ENCODE measurements at regions of chrX and their contacts with region 1.

Region 1: GRCh38 chrX:115393271-115393670 is 103.8 kb downstream of the LUZP4 start:
- DNase-seq: peak; percentile 32 to 34
- H3K4me3 ChIP-seq: no peak overlapping the region
- H3K4me3 Mint-ChIP-seq: peak overlapping the region; percentile 39
- H3K27ac Mint-ChIP-seq: peak overlapping the region; percentile 48
- H3K4me1 ChIP-seq: peaks cover 23% of the 10 kb centered on the region
- H3K4me1 Mint-ChIP-seq: peaks cover 17% of the 10 kb centered on the region
- H3K27me3 ChIP-seq: no peaks in the 10 kb centered on the region
- H3K27me3 Mint-ChIP-seq: no peaks in the 10 kb centered on the region
- CTCF ChIP-seq: no peak

Region 2: DNA sequence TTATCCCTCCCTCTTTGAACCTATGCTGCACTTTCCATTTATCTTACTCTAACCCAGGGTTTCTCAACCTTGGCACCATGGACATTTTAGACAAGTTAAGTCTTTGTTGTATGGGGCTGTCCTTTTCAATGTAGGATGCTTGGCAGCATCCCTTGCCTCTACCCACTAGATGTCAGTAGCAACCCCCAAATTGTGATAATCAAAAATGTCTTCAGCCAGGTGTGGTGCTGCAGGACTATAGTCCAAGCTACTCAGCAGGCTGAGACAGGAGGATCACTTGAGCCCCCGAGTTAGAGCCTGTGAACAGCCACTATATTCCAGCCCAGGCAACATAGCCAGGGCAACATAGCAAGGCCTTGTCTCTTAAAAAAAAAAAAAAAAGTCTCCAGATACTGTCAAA is 166.3 kb before region 1 on chrX:
- CTCF ChIA-PET with region 1: no interaction called
- POLR2A ChIA-PET with region 1: no interaction called
- intact Hi-C with region 1: no loop called
- DNase-seq: peak; percentile 38
- H3K4me3 ChIP-seq: no peak overlapping the region
- H3K4me3 Mint-ChIP-seq: no peak overlapping the region
- H3K27ac Mint-ChIP-seq: no peak overlapping the region
- H3K4me1 ChIP-seq: no peaks in the 10 kb centered on the region
- H3K4me1 Mint-ChIP-seq: no peaks in the 10 kb centered on the region
- H3K27me3 ChIP-seq: no peaks in the 10 kb centered on the region
- H3K27me3 Mint-ChIP-seq: peaks cover 3% of the 10 kb centered on the region
- CTCF ChIP-seq: peak; percentile 35 to 74

Region 3: DNA sequence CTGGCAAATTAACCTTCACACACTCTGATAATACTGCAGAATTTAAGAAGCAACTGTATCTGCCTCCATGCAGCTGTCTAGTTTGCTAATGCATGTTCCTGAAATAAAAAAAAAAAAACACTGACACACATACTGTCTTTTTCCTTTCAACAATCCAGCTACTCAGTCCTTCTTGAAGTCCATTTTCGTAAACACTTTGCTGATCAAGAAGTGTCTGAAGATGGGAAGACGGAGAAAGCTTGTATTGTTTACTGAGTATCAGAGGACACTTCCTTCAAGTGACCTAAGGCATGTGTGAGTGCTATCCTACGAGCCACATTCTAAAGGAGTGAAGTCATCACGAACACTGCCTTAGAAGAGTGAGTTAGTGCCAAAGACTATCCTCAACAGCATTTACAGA is 21.1 kb before region 1 on chrX:
- CTCF ChIA-PET with region 1: no interaction called
- POLR2A ChIA-PET with region 1: no interaction called
- intact Hi-C with region 1: no loop called
- DNase-seq: no peak
- H3K4me3 ChIP-seq: no peak overlapping the region
- H3K4me3 Mint-ChIP-seq: peak overlapping the region; percentile 46
- H3K27ac Mint-ChIP-seq: peak overlapping the region; percentile 88
- H3K4me1 ChIP-seq: peaks cover 23% of the 10 kb centered on the region
- H3K4me1 Mint-ChIP-seq: peaks cover 8% of the 10 kb centered on the region
- H3K27me3 ChIP-seq: no peaks in the 10 kb centered on the region
- H3K27me3 Mint-ChIP-seq: no peaks in the 10 kb centered on the region
- CTCF ChIP-seq: no peak

Region 4: GRCh38 chrX:115408771-115409400 is 15.6 kb after region 1 on chrX:
- CTCF ChIA-PET with region 1: no interaction called
- POLR2A ChIA-PET with region 1: no interaction called
- intact Hi-C with region 1: loop called (anchors 1 kb)
- DNase-seq: no peak
- H3K4me3 ChIP-seq: no peak overlapping the region
- H3K4me3 Mint-ChIP-seq: no peak overlapping the region
- H3K27ac Mint-ChIP-seq: no peak overlapping the region
- H3K4me1 ChIP-seq: peaks cover 50% of the 10 kb centered on the region
- H3K4me1 Mint-ChIP-seq: peaks cover 22% of the 10 kb centered on the region
- H3K27me3 ChIP-seq: no peaks in the 10 kb centered on the region
- H3K27me3 Mint-ChIP-seq: no peaks in the 10 kb centered on the region
- CTCF ChIP-seq: no peak